Panc1 (cell line): ENCODE measurements at regions of chr6 and their contacts with region 1.

Region 1: GRCh38 chr6:46491628-46492547 is 639 bp upstream of the RCAN2 start:
- DNase-seq: no peak
- ATAC-seq: peak; percentile 92
- H3K4me3 ChIP-seq: peak overlapping the region; percentile 39 to 65
- H3K27ac ChIP-seq: no peak overlapping the region
- H3K4me1 ChIP-seq: peaks cover 8% of the 10 kb centered on the region
- H3K27me3 ChIP-seq: peaks cover 42% of the 10 kb centered on the region
- CTCF ChIP-seq: peak; percentile 79

Region 2: GRCh38 chr6:45377554-45378333 is 1114.1 kb before region 1 on chr6 and contains the start of gene SUPT3H:
- CTCF ChIA-PET with region 1: interaction called, 12 read pairs
- POLR2A ChIA-PET with region 1: no interaction called
- in situ Hi-C with region 1: no loop called
- intact Hi-C with region 1: no loop called
- DNase-seq: peak; percentile 53
- ATAC-seq: peak; percentile 96
- H3K4me3 ChIP-seq: peak within 1 kb of the TSS; percentile 84 to 93
- H3K27ac ChIP-seq: peak within 1 kb of the TSS; percentile 96
- H3K4me1 ChIP-seq: peaks cover 15% of the 10 kb centered on the region
- H3K27me3 ChIP-seq: no peaks in the 10 kb centered on the region
- CTCF ChIP-seq: peak; percentile 32
- total RNA-seq, gene SUPT3H: 11.0 TPM

Region 3: GRCh38 chr6:46451343-46451742 is 40.5 kb before region 1 on chr6:
- CTCF ChIA-PET with region 1: no interaction called
- POLR2A ChIA-PET with region 1: no interaction called
- in situ Hi-C with region 1: no loop called
- intact Hi-C with region 1: no loop called
- DNase-seq: no peak
- ATAC-seq: no peak
- H3K4me3 ChIP-seq: no peak overlapping the region
- H3K27ac ChIP-seq: no peak overlapping the region
- H3K4me1 ChIP-seq: no peaks in the 10 kb centered on the region
- H3K27me3 ChIP-seq: no peaks in the 10 kb centered on the region
- CTCF ChIP-seq: no peak